Dorsolateral prefrontal cortex (tissue), 120 donors: ENCODE measurements at regions of chr7 and their contacts with region 1.

Region 1: GRCh38 chr7:332646-333392 is 42.8 kb downstream of the FOXL3 start:
- DNase-seq: peak; percentile 72 to 85 (median 76)
- H3K4me3 ChIP-seq: peak overlapping the region; percentile 25 to 74 (median 59)
- H3K27ac ChIP-seq: peak overlapping the region in 56 of 59 donors; percentile 47 to 94 (median 80)
- H3K27me3 ChIP-seq: no peaks in the 10 kb centered on the region
- CTCF ChIP-seq: peak; percentile 68 to 97 (median 91)

Region 2: DNA sequence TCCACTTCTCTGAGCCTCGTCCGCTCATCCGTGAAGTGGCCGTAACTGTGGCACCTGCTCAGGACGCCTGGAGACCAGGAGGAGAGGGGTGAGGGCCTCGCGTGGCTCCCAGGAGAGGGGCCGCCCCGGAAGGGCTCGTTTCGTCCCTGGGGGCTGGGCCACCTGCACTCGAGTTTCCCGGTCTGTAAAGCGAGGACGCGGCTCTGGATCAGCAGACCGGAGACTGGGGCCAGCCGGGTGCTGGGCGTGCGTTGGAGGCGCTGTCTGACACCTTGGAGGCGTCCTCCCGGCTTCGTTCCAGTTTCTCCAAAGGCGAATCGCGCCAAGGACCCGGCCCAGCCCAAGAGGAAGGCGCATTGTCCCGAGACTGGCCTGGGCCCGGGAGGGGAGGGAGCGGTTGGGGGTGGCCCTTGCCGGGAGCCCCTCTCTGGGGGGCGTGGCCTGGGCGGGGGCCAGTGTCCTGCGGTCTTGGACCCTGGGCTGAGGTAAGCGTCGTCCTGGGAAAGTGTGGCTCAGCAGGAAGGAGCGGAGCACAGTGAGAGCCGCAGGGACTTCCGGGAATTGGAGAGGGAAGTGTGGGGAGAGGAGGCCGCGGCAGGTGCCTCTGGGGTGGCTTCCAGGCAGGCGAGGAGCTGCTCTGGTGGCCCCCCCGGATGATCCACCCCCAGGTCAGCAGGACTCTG is 46.8 kb after region 1 on chr7:
- intact Hi-C with region 1: no loop called
- DNase-seq: peak in 7 of 10 donors; percentile 1 to 44 (median 26)
- H3K4me3 ChIP-seq: peak overlapping the region in 58 of 59 donors; percentile 3 to 62 (median 33)
- H3K27ac ChIP-seq: no peak overlapping the region
- H3K27me3 ChIP-seq: peaks cover 0 to 43% (median 9%) of the 10 kb centered on the region in 45 donors
- CTCF ChIP-seq: no peak

Region 3: GRCh38 chr7:593324-594115 is 260.7 kb after region 1 on chr7:
- intact Hi-C with region 1: loop called (anchors 5 kb)
- DNase-seq: peak in 5 of 10 donors; percentile 33 to 72 (median 60)
- H3K4me3 ChIP-seq: peak overlapping the region in 7 of 59 donors; percentile 6 to 42 (median 12)
- H3K27ac ChIP-seq: peak overlapping the region in 38 of 59 donors; percentile 11 to 82 (median 51)
- H3K27me3 ChIP-seq: no peaks in the 10 kb centered on the region
- CTCF ChIP-seq: no peak